HEK293 (cell line): ENCODE measurements at regions of chr17 and their contacts with region 1.

Region 1: DNA sequence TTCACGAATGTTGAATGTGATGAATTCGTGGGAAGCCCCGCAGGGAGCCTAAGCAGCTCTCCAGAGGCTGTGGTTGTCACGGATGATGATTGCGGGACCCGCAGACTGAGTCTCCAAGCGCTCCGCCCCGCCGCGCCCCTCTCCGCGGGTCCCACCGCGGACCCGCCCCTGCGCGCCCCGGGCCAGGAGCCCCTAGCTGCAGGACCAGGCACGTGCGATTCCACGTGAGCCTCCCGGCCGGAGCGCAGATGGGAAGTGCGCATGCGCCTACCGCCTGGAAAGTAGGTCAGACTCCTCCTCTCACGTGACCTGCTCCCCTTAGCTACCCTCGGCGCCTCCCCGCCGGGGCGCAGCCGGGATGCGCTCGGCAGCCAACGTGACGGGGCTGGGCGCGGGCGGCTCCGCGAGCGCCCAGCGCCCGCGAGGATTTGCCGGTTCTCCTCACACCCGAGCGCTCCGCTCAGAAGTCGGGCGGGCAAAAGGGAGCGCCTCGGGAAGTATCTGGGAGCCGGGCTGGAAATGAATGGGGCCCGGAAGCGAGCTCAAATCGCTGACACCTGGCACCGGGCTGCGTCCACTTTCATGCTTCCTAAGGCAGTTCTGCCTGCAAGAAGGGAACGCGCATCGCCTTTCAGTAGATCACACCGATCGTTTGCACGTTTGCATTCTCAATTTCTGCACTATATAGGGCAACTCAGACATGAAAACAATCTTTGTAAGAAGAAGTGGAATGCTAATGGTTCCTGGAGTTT is 26.4 kb upstream of the HLF start:
- H3K4me3 ChIP-seq: peak overlapping the region; percentile 53
- H3K27ac ChIP-seq: no peak overlapping the region; the same call in 1 of the 2 replicates
- H3K4me1 ChIP-seq: no peaks in the 10 kb centered on the region
- CTCF ChIP-seq: no peak

Region 2: DNA sequence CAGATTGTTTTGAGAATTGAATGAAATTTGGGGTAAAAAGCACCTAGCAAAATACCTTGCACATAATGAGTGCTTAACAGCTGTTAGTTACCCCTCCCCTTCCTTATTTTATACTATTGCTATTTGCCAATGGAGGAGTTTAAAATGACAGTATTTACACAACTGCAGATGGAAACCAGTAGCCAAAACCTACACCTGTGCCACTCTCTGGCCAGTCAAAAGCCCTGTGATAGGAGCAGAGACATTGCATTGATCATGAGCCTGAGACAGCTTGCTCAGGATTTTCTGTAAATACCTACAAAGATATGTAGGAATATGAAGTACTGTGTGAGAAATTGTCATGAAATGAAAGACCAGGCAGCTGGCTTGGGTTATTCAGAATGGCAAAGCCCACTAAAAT is 88.9 kb before region 1 on chr17:
- CTCF ChIA-PET with region 1: no interaction called
- POLR2A ChIA-PET with region 1: no interaction called
- H3K4me3 ChIP-seq: no peak overlapping the region
- H3K27ac ChIP-seq: no peak overlapping the region
- H3K4me1 ChIP-seq: no peaks in the 10 kb centered on the region
- CTCF ChIP-seq: no peak

Region 3: DNA sequence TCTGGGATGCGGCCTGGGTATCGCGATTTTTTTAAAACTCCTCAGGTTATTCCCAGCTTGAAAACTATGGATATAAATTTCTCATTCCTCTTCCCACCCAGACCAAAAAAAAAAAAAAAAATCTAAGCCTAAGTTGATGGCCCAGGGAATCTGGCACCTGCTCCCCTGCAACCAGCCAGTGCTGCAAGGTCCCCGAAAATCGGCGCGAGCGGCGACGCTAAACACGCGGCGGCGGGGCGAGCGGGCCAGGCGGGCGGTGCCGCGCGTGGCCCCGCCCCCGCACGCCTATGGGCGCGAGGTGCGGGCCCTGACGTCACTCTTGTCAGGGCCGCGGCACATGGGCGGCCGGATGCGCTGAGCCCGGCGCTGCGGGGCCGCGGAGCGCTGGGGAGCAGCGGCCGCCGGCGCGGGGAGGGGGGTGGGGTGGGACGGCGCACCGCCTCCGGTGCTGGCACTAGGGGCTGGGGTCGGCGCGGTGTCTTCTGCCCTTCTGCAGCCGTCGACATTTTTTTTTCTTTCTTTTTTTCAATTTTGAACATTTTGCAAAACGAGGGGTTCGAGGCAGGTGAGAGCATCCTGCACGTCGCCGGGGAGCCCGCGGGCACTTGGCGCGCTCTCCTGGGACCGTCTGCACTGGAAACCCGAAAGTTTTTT is 26.4 kb after region 1 on chr17 and contains the start of gene HLF:
- CTCF ChIA-PET with region 1: interaction called, 6 read pairs
- POLR2A ChIA-PET with region 1: interaction called, 11 read pairs
- H3K4me3 ChIP-seq: peak within 1 kb of the TSS; percentile 28
- H3K27ac ChIP-seq: no peak within 1 kb of the TSS
- H3K4me1 ChIP-seq: peaks cover 3% of the 10 kb centered on the region
- CTCF ChIP-seq: no peak